Activated T-helper 1 cell treated with anti-CD3 and anti-CD28 coated beads, Interleukin-12 subunit alpha, Interleukin-12 subunit beta, Interleukin-2, Interleukin-4 antibody, amounts not matched to agents 30 ng/mL and 10 ng/mL and 1 ng/mL, durations not matched to agents 14 hours and 24 hours and 36 hours (primary cell): ENCODE measurements at regions of chr7 and their contacts with region 1.

Region 1: DNA sequence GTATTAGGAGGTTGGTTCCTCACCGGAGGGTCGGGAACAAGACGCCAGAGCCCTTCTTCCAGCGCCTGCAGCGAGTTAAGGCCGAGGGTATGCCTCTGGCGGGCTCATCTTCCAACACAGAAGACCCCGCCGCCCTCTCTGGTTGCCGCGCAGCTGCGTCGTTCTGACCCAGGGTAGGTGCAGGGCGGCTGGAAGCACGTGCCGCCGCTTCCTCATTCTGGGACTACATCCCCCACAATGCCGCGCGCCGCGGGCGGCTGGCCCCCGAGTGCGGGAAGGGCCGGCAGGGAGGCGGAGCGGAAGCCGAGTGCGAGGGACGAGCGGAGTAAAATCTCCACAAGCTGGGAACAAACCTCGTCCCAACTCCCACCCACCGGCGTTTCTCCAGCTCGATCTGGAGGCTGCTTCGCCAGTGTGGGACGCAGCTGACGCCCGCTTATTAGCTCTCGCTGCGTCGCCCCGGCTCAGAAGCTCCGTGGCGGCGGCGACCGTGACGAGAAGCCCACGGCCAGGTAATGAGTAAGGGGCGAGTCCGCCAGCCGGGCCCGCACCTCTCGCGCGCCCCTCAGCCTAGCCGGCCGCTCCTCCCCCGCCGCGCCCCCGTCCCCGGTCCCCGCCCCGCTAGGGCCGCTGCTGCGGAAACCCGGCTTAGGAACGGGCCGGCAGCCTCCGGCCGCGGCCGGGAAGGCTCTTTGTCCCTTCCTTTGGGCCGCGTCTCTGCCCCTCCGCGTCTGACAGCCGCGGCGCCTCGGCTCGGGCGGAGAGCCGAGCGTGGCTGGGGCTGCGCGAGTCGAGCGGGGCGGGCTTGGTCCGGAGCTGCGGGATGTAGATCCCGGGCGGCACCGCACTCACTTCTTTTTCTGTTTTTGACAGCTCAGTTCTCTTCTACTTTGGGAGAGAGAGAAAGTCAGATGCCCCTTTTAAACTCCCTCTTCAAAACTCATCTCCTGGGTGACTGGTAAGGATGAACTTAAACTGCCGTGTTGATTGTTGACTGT is at the start of gene CCDC126:
- DNase-seq: peak; percentile 75
- H3K4me3 Mint-ChIP-seq: peak within 1 kb of the TSS; percentile 93
- H3K27ac Mint-ChIP-seq: peak within 1 kb of the TSS; percentile 89
- H3K4me1 Mint-ChIP-seq: peaks cover 63% of the 10 kb centered on the region
- H3K27me3 Mint-ChIP-seq: peaks cover 2% of the 10 kb centered on the region
- total RNA-seq, gene CCDC126: 8.2 and 10.7 TPM in 2 replicates

Region 2: DNA sequence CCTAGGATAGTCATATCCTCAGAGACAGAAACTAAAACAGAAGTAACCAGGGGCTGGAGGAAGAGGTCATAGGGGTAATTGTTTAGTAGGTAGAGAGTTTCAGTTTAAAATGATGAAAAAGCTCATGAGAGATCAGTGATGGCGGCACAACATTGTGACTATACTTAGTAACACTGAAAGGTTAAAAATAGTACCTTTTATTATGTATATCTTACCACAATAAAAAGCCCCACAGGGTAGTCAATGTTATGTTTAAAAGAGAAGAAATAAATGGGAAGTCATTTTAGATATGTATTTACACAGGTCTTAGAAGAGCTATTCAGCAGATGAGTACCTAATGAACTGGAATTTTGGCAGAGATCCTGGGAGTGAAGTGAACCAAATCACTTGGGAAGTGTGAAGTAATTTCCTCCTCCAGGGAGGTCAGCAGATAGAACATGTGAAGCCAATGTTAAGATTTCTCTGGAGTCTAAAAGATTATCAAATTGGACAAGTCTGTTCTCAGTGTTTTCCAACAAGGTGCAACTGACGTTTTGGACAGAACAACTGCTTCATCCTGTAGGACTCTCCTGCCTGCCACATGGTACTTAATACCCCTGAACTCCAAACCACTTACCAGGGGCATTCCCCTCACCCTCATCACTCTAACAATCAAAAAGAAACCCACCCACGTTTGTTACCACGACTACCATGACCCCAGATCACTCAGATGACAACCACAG is 1658.1 kb before region 1 on chr7:
- intact Hi-C with region 1: loop called (anchors 1 kb)
- DNase-seq: peak; percentile 34
- H3K4me3 Mint-ChIP-seq: peak overlapping the region; percentile 32
- H3K27ac Mint-ChIP-seq: peak overlapping the region; percentile 92
- H3K4me1 Mint-ChIP-seq: peaks cover 67% of the 10 kb centered on the region
- H3K27me3 Mint-ChIP-seq: no peaks in the 10 kb centered on the region

Region 3: GRCh38 chr7:23373151-23374004 is 224.0 kb before region 1 on chr7:
- intact Hi-C with region 1: loop called (anchors 1 kb)
- DNase-seq: no peak
- H3K4me3 Mint-ChIP-seq: peak overlapping the region; percentile 9
- H3K27ac Mint-ChIP-seq: peak overlapping the region; percentile 94
- H3K4me1 Mint-ChIP-seq: peaks cover 49% of the 10 kb centered on the region
- H3K27me3 Mint-ChIP-seq: peaks cover 6% of the 10 kb centered on the region

Region 4: DNA sequence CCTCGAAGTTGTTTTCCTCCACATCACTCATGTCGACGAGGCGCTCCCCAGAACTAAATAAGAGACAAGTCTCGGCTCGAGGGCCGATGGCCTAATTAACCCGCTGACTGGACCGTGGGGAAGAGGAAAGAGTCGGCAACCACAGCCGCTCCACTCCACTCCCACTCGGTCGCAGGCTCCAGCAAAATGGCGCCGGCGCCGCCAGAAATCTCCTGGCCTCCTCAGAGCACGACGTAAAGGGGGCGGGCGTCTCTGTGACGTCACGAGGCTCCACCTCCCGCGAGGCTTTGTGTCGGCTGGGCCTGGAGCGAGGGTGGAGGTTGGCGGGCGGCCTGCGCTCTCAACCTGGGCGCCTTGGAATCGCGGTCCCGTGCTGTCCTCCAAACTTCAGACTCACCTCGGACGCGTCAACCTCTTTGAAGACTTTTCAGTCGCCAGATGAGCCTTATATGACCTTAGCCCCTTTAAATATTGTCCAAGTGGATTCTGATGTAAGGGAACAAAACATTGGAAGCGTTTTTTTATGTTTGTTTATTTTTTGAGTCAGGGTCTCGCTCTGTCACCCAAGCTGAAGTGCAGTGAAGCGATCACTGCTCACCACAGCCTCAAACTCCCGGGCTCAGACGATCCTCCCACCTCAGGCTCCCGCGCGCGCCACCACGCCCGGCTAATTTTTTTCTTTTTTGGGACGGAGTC is 65.5 kb before region 1 on chr7 and contains the start of gene TRA2A:
- intact Hi-C with region 1: loop called (anchors 1 kb)
- DNase-seq: peak; percentile 95
- H3K4me3 Mint-ChIP-seq: peak within 1 kb of the TSS; percentile 99
- H3K27ac Mint-ChIP-seq: peak within 1 kb of the TSS; percentile 100
- H3K4me1 Mint-ChIP-seq: peaks cover 41% of the 10 kb centered on the region
- H3K27me3 Mint-ChIP-seq: no peaks in the 10 kb centered on the region
- total RNA-seq, gene TRA2A: 98.6 and 103 TPM in 2 replicates

Region 5: DNA sequence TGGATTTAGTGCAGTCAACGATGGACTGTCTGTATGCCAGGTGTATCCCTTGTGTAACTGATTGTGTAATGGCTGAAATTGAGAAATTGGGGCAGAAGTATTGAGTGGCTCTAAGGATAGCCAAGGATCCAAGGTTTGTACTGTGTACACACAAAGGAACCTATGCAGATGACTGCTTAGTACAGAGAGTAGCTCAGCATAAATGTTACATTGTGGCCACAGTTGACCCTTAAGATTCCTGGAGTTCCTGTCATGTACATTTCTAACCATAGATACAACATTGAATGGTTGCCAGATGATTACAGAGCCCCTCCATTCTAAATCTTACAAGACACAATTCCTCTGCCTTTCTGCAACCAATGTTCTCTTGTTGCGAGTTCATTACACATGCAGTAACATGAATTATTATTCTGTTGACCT is 25.1 kb after region 1 on chr7:
- intact Hi-C with region 1: no loop called
- DNase-seq: no peak
- H3K4me3 Mint-ChIP-seq: no peak overlapping the region
- H3K27ac Mint-ChIP-seq: no peak overlapping the region
- H3K4me1 Mint-ChIP-seq: no peaks in the 10 kb centered on the region
- H3K27me3 Mint-ChIP-seq: no peaks in the 10 kb centered on the region

Region 6: GRCh38 chr7:23633417-23633816 is 36.0 kb after region 1 on chr7:
- intact Hi-C with region 1: no loop called
- DNase-seq: no peak
- H3K4me3 Mint-ChIP-seq: no peak overlapping the region
- H3K27ac Mint-ChIP-seq: no peak overlapping the region
- H3K4me1 Mint-ChIP-seq: no peaks in the 10 kb centered on the region
- H3K27me3 Mint-ChIP-seq: peaks cover 1% of the 10 kb centered on the region

Region 7: DNA sequence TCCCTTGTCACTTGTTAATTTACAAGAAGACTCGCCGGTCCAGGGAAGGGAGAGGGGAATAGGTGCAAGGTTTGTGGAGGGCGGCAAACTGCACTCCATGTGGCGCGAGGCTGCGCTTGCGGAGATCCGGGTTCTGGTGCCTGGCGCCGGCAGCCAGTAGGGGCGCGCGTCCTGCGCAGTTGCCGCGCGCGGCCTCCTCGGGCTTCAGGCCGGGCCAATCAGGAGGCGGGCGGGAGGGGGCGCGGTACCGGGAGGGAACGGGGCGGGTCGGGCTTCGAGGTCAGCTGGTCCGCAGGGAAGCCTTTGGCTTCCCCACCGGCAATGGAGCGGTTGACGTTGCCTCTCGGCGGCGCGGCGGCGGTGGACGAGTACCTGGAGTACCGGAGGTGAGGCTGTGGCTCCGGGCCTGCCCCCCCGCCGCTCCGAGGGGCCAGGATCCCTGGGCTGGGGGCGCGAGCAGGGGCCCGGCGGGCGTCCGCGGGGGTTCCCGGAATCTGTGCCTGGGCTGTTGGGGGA is 82.6 kb after region 1 on chr7 and contains the start of gene FAM221A:
- intact Hi-C with region 1: loop called (anchors 1 kb)
- DNase-seq: peak; percentile 70
- H3K4me3 Mint-ChIP-seq: peak within 1 kb of the TSS; percentile 88
- H3K27ac Mint-ChIP-seq: peak within 1 kb of the TSS; percentile 72
- H3K4me1 Mint-ChIP-seq: peaks cover 12% of the 10 kb centered on the region
- H3K27me3 Mint-ChIP-seq: peaks cover 18% of the 10 kb centered on the region
- total RNA-seq, gene FAM221A: 9.4 and 9.9 TPM in 2 replicates

Region 8: DNA sequence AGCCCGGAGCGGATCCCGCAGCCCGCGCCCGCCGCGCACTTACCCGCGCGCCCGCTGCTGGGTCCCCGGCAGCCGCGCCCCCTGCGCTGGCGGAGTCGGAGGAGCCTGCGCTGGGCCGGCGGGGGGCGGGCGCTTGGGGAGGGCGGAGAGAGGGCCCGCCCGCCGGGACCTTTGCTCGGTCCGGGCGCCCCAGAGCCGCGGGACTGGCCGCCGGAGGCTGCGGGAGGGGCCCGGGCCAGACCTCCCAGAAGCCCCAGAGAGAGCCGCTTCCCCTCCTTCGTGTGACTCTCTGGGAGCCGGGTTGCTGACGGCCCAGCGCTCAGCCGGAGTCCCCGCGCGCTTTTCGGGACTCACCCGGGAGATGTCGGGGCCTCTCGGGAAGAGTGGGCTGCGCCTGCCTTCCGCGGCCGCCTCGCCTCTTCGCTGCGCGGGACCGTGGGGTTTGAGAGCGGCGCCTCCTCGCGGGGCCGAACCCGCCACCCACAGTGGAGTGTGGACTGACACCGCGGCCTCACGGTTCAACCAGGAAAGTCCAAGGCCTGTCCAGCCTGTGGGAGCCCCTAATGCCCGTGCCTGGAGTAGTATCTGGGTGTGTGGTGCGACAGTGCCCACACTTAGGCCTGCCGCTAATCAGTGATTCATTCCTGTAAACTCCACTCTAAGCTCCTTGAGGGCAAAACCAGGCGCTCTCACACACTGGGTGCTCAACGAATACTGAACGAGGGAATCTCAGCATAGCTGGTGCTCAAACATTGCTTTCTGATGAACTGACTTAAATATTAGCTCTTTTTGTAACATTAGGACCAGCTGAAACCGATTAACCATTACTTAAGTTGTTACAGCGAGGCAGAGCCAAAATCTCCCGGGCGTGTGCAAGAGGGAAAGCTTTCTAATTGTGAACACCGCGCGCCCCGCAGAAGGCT is 1160.2 kb after region 1 on chr7 and contains the start of gene GSDME:
- intact Hi-C with region 1: loop called (anchors 1 kb)
- DNase-seq: peak; percentile 21
- H3K4me3 Mint-ChIP-seq: peak within 1 kb of the TSS; percentile 91
- H3K27ac Mint-ChIP-seq: peak within 1 kb of the TSS; percentile 84
- H3K4me1 Mint-ChIP-seq: peaks cover 38% of the 10 kb centered on the region
- H3K27me3 Mint-ChIP-seq: peaks cover 44% of the 10 kb centered on the region
- total RNA-seq, gene GSDME: 10.6 and 11.0 TPM in 2 replicates

Region 9: GRCh38 chr7:25093268-25093826 is 1496.0 kb after region 1 on chr7:
- intact Hi-C with region 1: loop called (anchors 10 kb)
- DNase-seq: peak; percentile 67
- H3K4me3 Mint-ChIP-seq: no peak overlapping the region
- H3K27ac Mint-ChIP-seq: no peak overlapping the region
- H3K4me1 Mint-ChIP-seq: peaks cover 18% of the 10 kb centered on the region
- H3K27me3 Mint-ChIP-seq: peaks cover 18% of the 10 kb centered on the region